Endothelial cell of umbilical vein (primary cell): ENCODE measurements at regions of chr10 and their contacts with region 1.

Region 1: GRCh38 chr10:117363028-117363427 is 12.2 kb downstream of the PDZD8 start:
- DNase-seq: no peak
- H3K4me3 ChIP-seq: no peak overlapping the region
- H3K27ac ChIP-seq: no peak overlapping the region
- H3K4me1 ChIP-seq: peaks cover 37% of the 10 kb centered on the region
- H3K27me3 ChIP-seq: no peaks in the 10 kb centered on the region
- CTCF ChIP-seq: no peak
- POLR2A ChIP-seq: no peak

Region 2: GRCh38 chr10:116985611-116986010 is 377.4 kb before region 1 on chr10:
- CTCF ChIA-PET with region 1: no interaction called
- POLR2A ChIA-PET with region 1: no interaction called
- dilution Hi-C with region 1: no loop called
- intact Hi-C with region 1: no loop called
- DNase-seq: peak; percentile 31
- H3K4me3 ChIP-seq: no peak overlapping the region
- H3K27ac ChIP-seq: no peak overlapping the region
- H3K4me1 ChIP-seq: peaks cover 16% of the 10 kb centered on the region
- H3K27me3 ChIP-seq: no peaks in the 10 kb centered on the region
- CTCF ChIP-seq: no peak
- POLR2A ChIP-seq: no peak

Region 3: DNA sequence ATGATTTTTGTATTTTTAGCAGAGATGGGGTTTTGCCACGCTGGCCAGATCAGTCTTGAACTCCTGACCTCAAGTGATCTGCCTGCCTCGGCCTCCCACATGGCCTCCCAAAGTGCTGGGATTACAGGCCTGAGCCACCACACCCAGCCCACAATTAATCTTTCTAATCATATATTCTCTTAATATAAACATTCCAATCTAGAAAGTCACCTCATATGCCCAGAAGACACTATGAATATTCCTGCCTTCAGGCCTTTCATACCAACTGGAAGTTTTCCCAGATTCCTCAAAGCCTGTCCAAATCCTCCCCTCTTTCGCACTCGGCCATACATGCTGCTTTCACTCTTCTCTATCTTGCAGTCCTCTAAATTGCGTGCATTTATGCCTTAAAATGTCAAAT is 20.4 kb before region 1 on chr10:
- CTCF ChIA-PET with region 1: no interaction called
- POLR2A ChIA-PET with region 1: no interaction called
- dilution Hi-C with region 1: no loop called
- intact Hi-C with region 1: loop called (anchors 2 kb)
- DNase-seq: no peak
- H3K4me3 ChIP-seq: no peak overlapping the region
- H3K27ac ChIP-seq: no peak overlapping the region
- H3K4me1 ChIP-seq: no peaks in the 10 kb centered on the region
- H3K27me3 ChIP-seq: no peaks in the 10 kb centered on the region
- CTCF ChIP-seq: no peak
- POLR2A ChIP-seq: no peak

Region 4: DNA sequence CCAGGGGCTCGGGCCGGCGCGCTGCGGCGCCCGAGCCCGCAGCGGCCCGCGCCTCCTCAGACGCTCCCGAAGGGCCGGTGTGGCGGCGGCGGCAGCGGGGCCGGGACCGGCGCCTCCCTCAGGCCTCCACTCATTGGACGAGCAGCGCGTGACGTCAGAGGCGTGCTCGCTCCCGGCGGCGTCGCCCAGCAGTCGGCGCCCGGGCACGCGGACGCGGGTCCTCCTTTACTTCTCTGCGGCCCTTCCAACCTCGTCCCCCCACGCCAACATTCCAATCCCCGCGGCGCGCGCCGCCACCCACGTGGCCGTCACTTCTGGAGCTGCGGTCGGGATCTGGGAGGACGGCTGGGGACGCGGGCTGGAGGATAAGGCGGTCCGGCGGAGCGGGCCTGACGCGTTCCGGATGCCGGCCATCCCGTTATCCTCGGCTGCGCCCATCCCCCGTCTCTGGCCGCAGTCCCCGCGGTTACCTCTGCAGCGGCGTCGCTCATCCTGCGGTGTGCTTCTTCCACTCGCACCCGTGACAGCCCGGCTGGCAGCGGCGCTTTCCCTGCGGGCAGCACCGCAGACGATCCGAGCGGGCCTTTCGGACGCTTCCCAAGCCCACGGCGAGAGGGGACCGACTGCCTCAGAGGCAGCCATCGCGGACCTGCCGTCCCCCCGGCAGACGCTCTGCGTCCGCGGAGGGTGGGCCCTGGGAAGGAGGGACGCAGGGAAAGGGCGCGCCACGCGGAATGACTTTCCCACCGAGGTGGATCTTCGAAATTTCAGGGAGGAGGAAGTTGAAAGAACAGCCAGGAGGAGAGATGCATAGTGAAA is 12.5 kb after region 1 on chr10 and contains the start of gene PDZD8:
- CTCF ChIA-PET with region 1: interaction called, 12 read pairs
- POLR2A ChIA-PET with region 1: no interaction called
- dilution Hi-C with region 1: no loop called
- intact Hi-C with region 1: loop called (anchors 1 kb)
- DNase-seq: peak; percentile 92
- H3K4me3 ChIP-seq: peak within 1 kb of the TSS; percentile 47 to 88 (median 84)
- H3K27ac ChIP-seq: peak within 1 kb of the TSS; percentile 83
- H3K4me1 ChIP-seq: peaks cover 21% of the 10 kb centered on the region
- H3K27me3 ChIP-seq: peaks cover 22 to 29% of the 10 kb centered on the region in 2 experiments
- CTCF ChIP-seq: no peak
- POLR2A ChIP-seq: peak; percentile 87
- total RNA-seq, gene PDZD8: 21.9 and 22.6 TPM in 2 replicates

Region 5: DNA sequence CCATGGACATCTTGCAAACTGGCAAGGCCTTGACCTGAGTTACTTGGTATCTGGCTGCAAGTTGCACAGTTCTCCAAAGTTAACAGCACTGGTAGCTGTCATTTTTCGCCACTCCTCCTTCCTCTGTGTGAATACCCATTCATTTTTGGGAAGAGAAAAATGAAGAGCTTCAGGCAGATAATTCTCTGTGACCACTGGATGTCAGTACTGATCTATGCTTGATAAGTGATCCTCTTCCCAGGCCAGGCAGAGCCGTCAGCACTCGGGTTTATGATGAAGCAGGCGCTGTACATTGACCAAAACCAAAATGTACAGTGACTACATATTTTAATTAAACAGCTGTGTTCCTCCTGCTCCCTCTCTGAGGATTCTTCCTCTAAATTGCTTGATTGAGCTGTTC is 68.1 kb after region 1 on chr10:
- CTCF ChIA-PET with region 1: no interaction called
- POLR2A ChIA-PET with region 1: no interaction called
- dilution Hi-C with region 1: no loop called
- intact Hi-C with region 1: no loop called
- DNase-seq: no peak
- H3K4me3 ChIP-seq: no peak overlapping the region
- H3K27ac ChIP-seq: no peak overlapping the region
- H3K4me1 ChIP-seq: no peaks in the 10 kb centered on the region
- H3K27me3 ChIP-seq: peaks cover 0 to 3% of the 10 kb centered on the region in 2 experiments
- CTCF ChIP-seq: no peak
- POLR2A ChIP-seq: no peak